ENCODE measurements at regions of chr6 and their contacts with region 1.

Region 1: DNA sequence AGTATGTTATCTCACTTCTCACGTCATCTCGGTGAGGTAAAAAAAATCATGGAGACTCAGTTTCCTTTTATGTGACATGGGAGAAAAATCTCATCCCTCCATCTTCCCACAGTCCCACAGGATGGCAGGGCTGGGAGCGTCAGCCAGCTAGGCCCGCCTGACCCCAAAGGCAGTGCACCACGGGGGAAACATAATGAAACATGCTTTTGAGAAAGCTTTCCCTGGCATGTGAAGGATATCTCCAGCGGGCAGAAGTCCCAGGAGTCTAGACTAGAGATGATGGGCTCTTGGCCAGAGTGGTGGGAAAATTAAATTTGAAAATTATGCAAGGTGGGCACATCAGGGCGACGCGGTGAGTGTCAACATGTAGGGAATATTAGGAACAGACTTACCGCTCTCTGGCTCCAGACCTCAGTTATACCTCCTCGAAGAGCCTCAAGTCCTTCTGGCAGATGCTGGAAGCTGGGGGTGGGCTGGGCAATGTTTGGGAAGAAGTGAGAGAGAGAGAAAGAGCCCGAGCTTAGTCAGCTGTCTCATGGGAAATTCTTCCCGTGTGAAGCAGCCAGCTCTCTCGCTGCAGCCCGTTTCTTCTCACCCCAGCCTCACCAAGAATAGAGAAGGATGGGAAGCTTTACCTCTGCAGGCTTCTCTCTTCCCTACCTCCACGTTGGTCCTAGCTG is 52.3 kb downstream of the MOCS1 start:
- DNase-seq: peak; percentile 88
- ATAC-seq: peak; percentile 52
- H3K4me3 ChIP-seq: no peak overlapping the region
- H3K27ac ChIP-seq: peak overlapping the region; percentile 99
- H3K4me1 ChIP-seq: peaks cover 47% of the 10 kb centered on the region
- H3K27me3 ChIP-seq: no peaks in the 10 kb centered on the region
- CTCF ChIP-seq: no peak
- POLR2A ChIP-seq: no peak
- RAD21 ChIP-seq: no peak

Region 2: DNA sequence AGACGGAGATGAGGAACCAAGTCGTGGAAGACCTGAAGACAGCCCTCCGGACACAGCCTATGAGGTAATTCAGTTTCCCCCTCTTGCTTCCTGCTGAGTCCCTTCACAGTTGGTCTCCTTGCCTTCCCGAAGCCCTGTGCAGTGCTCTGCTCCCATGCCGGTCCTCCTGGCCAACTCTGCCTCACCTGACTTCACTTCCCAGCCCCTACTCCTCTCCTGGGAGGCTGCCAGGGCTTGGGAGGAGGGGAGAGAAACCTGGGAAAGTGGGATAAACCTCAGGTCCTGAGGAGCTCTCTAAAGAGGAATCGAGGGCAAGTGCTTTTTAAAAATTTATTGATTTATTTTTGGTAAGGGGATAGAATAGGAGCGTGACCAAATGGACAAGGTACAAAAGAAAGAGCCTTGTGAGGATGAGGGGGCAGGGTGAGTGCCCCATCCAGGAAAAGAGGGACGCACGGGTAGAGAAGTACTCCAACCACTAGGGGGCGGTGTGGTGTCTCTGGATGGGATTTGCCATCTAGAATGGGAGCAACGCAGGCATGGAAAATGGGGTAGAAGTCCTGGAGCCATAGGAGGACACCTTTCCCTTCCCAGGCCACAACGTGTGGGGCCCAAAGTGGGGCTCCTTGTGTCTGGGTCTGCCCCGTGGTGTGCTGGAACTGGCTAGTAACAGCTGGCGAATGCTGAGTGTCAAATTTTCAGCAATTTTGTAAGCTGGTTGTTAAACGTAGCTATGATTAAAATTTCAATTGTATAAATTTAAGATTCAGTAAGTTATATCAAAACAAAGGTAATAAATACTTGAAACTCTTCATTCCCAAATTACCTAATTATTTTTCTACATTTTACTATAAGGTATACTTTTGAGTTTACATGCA is 16.7 kb before region 1 on chr6:
- CTCF ChIA-PET with region 1: interaction called, 11 read pairs
- POLR2A ChIA-PET with region 1: no interaction called
- dilution Hi-C with region 1: no loop called
- in situ Hi-C with region 1: no loop called
- intact Hi-C with region 1: no loop called
- DNase-seq: peak; percentile 60
- ATAC-seq: peak; percentile 90
- H3K4me3 ChIP-seq: no peak overlapping the region
- H3K27ac ChIP-seq: no peak overlapping the region
- H3K4me1 ChIP-seq: no peaks in the 10 kb centered on the region
- H3K27me3 ChIP-seq: no peaks in the 10 kb centered on the region
- CTCF ChIP-seq: peak; percentile 74
- POLR2A ChIP-seq: no peak
- RAD21 ChIP-seq: peak; percentile 81

Region 3: DNA sequence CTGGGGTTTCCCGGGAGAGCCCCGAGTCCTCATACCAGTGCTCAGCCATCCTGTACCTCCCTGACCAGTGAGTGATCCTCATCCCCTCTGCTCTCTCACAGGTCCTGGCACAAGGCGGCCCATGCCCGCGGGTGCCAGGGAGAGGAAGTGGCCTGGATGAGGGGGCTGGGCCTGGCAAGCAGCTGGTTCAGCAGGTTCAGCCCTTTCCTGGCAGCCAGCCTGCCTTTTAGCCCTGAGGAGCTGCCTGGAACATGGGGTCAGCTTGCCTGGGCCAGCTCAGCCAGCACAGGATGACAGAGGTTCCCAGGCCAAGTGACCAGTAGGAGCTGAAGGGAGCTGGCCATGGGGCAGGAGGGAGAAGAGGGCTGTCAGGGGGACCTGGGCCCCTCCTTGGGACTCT is 41.4 kb after region 1 on chr6:
- CTCF ChIA-PET with region 1: no interaction called
- POLR2A ChIA-PET with region 1: no interaction called
- dilution Hi-C with region 1: no loop called
- in situ Hi-C with region 1: no loop called
- intact Hi-C with region 1: no loop called
- DNase-seq: no peak
- ATAC-seq: no peak
- H3K4me3 ChIP-seq: no peak overlapping the region
- H3K27ac ChIP-seq: no peak overlapping the region
- H3K4me1 ChIP-seq: peaks cover 4% of the 10 kb centered on the region
- H3K27me3 ChIP-seq: no peaks in the 10 kb centered on the region
- CTCF ChIP-seq: no peak
- POLR2A ChIP-seq: no peak
- RAD21 ChIP-seq: no peak